WTC11 (cell line): ENCODE measurements at regions of chr14 and their contacts with region 1.

Region 1: GRCh38 chr14:94136575-94137331 is 7.3 kb upstream of the IFI27L2 start:
- DNase-seq: peak; percentile 93
- ATAC-seq: peak; percentile 87
- H3K4me3 Mint-ChIP-seq: no peak overlapping the region
- H3K27ac Mint-ChIP-seq: no peak overlapping the region
- H3K4me1 Mint-ChIP-seq: peaks cover 19% of the 10 kb centered on the region
- H3K27me3 Mint-ChIP-seq: peaks cover 7% of the 10 kb centered on the region; the same call in 1 of the 2 replicates
- CTCF ChIP-seq: peak; percentile 92

Region 2: DNA sequence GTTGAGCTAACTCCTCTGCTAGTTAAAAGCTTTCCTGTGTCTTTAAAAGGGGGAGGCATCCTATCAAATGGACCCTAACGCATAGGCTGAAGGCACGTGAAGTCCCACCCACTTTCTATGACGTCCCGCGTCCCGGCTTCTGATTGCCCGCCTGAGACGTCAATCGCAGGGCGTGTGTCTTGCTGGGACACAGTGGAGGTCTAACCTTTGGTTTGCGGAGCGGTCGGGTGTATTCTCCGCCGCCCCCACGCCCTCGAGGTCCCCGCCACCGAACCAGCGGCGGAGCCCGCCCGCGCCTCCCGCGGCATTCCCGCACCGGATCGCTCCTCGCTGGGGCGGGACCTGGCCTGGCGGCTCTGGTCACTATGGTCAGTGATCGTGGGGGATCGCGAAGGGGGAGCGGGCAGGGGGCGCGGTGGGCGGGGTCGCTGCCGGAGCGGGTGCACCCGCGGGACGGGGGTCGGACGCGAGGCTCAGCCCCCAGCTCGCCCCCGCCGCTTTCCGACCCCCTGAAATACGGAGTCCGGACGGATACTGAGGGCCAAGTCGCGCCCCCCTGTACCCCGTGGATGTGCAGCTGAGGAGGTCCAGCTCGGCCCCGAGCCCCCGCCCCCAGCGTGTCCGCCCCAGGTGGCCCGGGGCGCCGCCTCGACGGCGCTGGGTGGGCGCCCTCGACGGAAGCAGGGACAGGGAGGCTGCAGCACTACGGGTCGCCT is 110.4 kb before region 1 on chr14 and contains the start of gene OTUB2:
- CTCF ChIA-PET with region 1: interaction called, 18 read pairs
- POLR2A ChIA-PET with region 1: no interaction called
- DNase-seq: peak; percentile 98
- ATAC-seq: peak; percentile 99
- H3K4me3 Mint-ChIP-seq: peak within 1 kb of the TSS; percentile 65
- H3K27ac Mint-ChIP-seq: no peak within 1 kb of the TSS
- H3K4me1 Mint-ChIP-seq: peaks cover 20% of the 10 kb centered on the region
- H3K27me3 Mint-ChIP-seq: no peaks in the 10 kb centered on the region
- CTCF ChIP-seq: no peak
- total RNA-seq, gene OTUB2: 3.5 to 4.5 TPM (median 3.9 TPM) in 3 replicates

Region 3: DNA sequence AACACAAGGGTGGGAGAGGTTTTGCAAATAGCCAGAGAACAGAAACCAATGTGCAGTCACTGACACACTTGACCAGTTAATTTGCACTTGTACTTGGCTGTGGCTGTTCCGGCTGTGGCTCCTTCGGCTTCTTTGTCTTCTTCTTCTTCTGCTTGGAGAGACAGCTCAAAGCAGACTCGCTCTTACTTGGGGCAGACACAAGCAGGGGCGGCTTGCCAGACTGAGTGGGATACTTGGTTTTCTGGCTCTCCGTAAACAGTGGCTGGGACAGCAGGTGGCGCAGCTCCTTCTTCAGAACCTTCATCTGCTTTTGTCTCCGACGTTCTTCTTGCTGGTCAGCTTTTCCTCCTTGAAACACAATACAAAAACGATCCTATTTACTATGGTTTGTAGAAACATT is 85.6 kb before region 1 on chr14:
- CTCF ChIA-PET with region 1: interaction called, 46 read pairs
- POLR2A ChIA-PET with region 1: no interaction called
- DNase-seq: peak; percentile 50
- ATAC-seq: peak; percentile 81
- H3K4me3 Mint-ChIP-seq: no peak overlapping the region
- H3K27ac Mint-ChIP-seq: peak overlapping the region; percentile 17; the same call in 1 of the 2 replicates
- H3K4me1 Mint-ChIP-seq: peaks cover 11% of the 10 kb centered on the region
- H3K27me3 Mint-ChIP-seq: no peaks in the 10 kb centered on the region
- CTCF ChIP-seq: no peak

Region 4: GRCh38 chr14:94080471-94081289 is 56.1 kb before region 1 on chr14 and contains the start of gene DDX24:
- CTCF ChIA-PET with region 1: interaction called, 19 read pairs
- POLR2A ChIA-PET with region 1: interaction called, 4 read pairs
- DNase-seq: peak; percentile 96
- ATAC-seq: peak; percentile 36
- H3K4me3 Mint-ChIP-seq: peak within 1 kb of the TSS; percentile 100
- H3K27ac Mint-ChIP-seq: peak within 1 kb of the TSS; percentile 93
- H3K4me1 Mint-ChIP-seq: peaks cover 29% of the 10 kb centered on the region
- H3K27me3 Mint-ChIP-seq: no peaks in the 10 kb centered on the region
- CTCF ChIP-seq: no peak
- total RNA-seq, gene DDX24: 137 to 174 TPM (median 140 TPM) in 3 replicates

Region 5: DNA sequence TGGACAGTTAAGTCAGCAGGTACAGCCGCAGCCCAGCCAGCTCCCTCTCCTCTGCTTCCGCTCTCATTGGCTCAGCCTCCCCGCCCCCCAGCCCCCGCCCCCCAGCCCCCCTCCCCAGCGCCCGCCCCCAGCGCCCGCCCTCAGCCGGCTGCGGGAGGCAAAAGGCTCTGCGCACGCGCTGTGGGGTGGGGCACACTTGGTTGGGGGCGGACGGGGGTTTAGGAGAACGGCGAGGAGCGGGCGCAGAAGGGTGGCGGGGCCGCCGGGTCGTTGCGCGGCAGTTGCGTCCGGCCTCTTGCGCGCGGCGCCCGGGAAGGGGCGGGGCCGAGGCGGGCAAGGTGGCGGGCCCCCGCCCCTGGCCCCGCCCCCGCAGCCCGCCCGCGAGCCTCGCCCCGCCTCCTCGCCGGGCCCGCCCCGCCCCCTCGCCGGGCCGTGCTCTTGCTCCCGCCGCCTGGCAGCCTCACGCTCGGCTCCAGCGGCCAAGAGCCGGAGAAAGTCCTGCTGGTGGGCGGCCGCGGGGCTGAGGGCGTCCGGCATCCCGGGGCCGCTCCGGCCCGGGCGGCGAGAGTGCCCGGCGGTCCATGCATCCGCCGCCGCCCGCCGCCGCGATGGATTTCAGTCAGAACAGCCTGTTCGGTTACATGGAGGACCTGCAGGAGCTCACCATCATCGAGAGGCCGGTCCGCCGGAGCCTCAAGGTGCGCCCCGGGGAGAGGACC is 37.3 kb after region 1 on chr14 and contains the start of gene PPP4R4:
- CTCF ChIA-PET with region 1: interaction called, 41 read pairs
- POLR2A ChIA-PET with region 1: interaction called, 5 read pairs
- DNase-seq: peak; percentile 98
- ATAC-seq: peak; percentile 89
- H3K4me3 Mint-ChIP-seq: peak within 1 kb of the TSS; percentile 88
- H3K27ac Mint-ChIP-seq: peak within 1 kb of the TSS; percentile 60
- H3K4me1 Mint-ChIP-seq: peaks cover 30% of the 10 kb centered on the region
- H3K27me3 Mint-ChIP-seq: peaks cover 50% of the 10 kb centered on the region
- CTCF ChIP-seq: no peak
- total RNA-seq, gene PPP4R4: 8.1 to 9.6 TPM (median 8.2 TPM) in 3 replicates

Region 6: GRCh38 chr14:94307410-94307992 is 170.7 kb after region 1 on chr14:
- CTCF ChIA-PET with region 1: interaction called, 32 read pairs
- POLR2A ChIA-PET with region 1: no interaction called
- DNase-seq: no peak
- ATAC-seq: peak; percentile 73
- H3K4me3 Mint-ChIP-seq: no peak overlapping the region
- H3K27ac Mint-ChIP-seq: no peak overlapping the region
- H3K4me1 Mint-ChIP-seq: no peaks in the 10 kb centered on the region
- H3K27me3 Mint-ChIP-seq: no peaks in the 10 kb centered on the region; the same call in 1 of the 2 replicates
- CTCF ChIP-seq: peak; percentile 60